ENCODE measurements at regions of chr1 and their contacts with region 1.

Region 1: GRCh38 chr1:11719313-11720032 is 16.5 kb upstream of the AGTRAP start:
- DNase-seq: peak; percentile 78
- ATAC-seq: peak; percentile 89
- H3K4me3 Mint-ChIP-seq: peak overlapping the region; percentile 86
- H3K27ac Mint-ChIP-seq: peak overlapping the region; percentile 94
- H3K4me1 Mint-ChIP-seq: peaks cover 13% of the 10 kb centered on the region
- H3K27me3 Mint-ChIP-seq: no peaks in the 10 kb centered on the region
- CTCF ChIP-seq: peak; percentile 87

Region 2: DNA sequence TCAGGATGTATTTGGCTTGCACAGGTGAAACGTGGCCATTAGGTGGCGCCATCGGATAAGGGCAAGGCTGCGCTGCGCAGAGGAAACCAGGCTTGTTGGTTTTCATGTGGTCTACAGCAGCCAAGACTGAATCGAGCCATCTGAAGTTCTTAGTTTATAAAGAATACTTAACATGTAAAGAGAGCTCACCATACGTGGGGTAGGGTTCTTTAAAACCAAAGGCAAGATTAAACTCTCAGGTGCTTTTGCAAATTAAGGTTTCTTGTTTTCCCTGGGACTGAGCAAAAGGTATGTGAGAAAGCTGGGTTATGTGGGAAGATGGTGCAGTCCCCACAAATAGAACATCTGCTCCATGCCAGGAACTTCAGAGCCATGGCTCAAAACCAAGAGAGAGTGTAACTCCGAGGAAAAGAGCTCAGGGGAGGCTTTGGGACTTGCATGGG is 681.7 kb before region 1 on chr1:
- CTCF ChIA-PET with region 1: interaction called, 7 read pairs
- POLR2A ChIA-PET with region 1: no interaction called
- intact Hi-C with region 1: loop called (anchors 1 kb)
- DNase-seq: peak; percentile 72
- ATAC-seq: peak; percentile 96
- H3K4me3 Mint-ChIP-seq: no peak overlapping the region
- H3K27ac Mint-ChIP-seq: no peak overlapping the region
- H3K4me1 Mint-ChIP-seq: peaks cover 4% of the 10 kb centered on the region
- H3K27me3 Mint-ChIP-seq: peaks cover 6% of the 10 kb centered on the region
- CTCF ChIP-seq: peak; percentile 57

Region 3: GRCh38 chr1:11337580-11338073 is 381.8 kb before region 1 on chr1:
- CTCF ChIA-PET with region 1: interaction called, 3 read pairs
- POLR2A ChIA-PET with region 1: no interaction called
- intact Hi-C with region 1: loop called (anchors 1 kb)
- DNase-seq: peak; percentile 68
- ATAC-seq: peak; percentile 59
- H3K4me3 Mint-ChIP-seq: no peak overlapping the region
- H3K27ac Mint-ChIP-seq: no peak overlapping the region
- H3K4me1 Mint-ChIP-seq: peaks cover 22% of the 10 kb centered on the region
- H3K27me3 Mint-ChIP-seq: peaks cover 22% of the 10 kb centered on the region
- CTCF ChIP-seq: peak; percentile 76

Region 4: DNA sequence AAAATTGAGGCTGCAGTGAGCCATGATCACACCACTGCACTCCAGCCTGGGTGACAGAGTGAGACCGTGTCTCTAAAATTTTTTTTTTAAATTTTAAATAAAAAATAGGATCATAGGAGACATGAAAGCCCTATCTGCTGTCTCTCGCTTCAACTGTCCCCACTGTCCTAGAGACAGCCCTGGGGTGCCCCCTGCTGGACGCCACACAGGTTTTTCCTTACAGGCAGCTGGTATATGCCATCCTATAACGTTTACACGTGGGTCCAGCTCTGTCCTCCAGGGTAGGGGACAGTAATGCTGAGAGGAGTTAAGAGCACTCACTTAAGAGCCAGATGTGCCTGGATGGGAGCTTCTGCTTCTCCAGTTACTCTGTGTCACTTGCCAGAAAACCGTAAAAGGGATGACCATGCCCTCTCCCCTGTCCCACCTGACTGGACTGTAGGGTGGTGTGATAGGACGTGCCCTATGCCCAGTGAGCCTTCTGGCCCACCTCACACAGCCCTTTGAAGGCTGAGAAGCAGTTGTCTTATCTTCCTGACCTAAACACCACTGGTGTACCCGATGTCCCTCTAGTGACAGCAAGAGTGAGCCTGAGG is 73.7 kb before region 1 on chr1:
- CTCF ChIA-PET with region 1: interaction called, 74 read pairs
- POLR2A ChIA-PET with region 1: interaction called, 36 read pairs
- intact Hi-C with region 1: loop called (anchors 1 kb)
- DNase-seq: peak; percentile 66
- ATAC-seq: peak; percentile 48
- H3K4me3 Mint-ChIP-seq: no peak overlapping the region
- H3K27ac Mint-ChIP-seq: no peak overlapping the region
- H3K4me1 Mint-ChIP-seq: peaks cover 15% of the 10 kb centered on the region
- H3K27me3 Mint-ChIP-seq: peaks cover 2% of the 10 kb centered on the region
- CTCF ChIP-seq: no peak

Region 5: DNA sequence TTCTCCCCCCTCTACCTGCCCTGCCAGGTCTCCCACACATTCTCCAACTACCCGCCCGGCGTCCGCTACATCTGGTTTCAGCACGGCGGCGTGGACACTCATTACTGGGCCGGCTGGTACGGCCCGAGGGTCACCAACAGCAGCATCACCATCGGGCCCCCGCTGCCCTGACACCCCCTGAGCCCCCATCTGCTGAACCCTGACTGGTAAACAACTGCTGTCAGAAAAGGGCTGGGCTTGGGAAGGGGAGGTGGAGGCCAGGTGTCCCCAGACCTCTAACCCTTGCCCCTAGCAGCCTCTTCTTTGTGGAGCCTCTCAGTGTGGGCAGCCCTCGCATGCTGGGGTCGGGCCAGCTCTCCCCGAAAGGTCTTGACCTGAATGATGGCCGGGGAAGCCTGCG is 58.4 kb before region 1 on chr1:
- CTCF ChIA-PET with region 1: interaction called, 61 read pairs
- POLR2A ChIA-PET with region 1: interaction called, 48 read pairs
- intact Hi-C with region 1: loop called (anchors 1 kb)
- DNase-seq: no peak
- ATAC-seq: no peak
- H3K4me3 Mint-ChIP-seq: no peak overlapping the region
- H3K27ac Mint-ChIP-seq: no peak overlapping the region
- H3K4me1 Mint-ChIP-seq: no peaks in the 10 kb centered on the region
- H3K27me3 Mint-ChIP-seq: no peaks in the 10 kb centered on the region
- CTCF ChIP-seq: no peak

Region 6: DNA sequence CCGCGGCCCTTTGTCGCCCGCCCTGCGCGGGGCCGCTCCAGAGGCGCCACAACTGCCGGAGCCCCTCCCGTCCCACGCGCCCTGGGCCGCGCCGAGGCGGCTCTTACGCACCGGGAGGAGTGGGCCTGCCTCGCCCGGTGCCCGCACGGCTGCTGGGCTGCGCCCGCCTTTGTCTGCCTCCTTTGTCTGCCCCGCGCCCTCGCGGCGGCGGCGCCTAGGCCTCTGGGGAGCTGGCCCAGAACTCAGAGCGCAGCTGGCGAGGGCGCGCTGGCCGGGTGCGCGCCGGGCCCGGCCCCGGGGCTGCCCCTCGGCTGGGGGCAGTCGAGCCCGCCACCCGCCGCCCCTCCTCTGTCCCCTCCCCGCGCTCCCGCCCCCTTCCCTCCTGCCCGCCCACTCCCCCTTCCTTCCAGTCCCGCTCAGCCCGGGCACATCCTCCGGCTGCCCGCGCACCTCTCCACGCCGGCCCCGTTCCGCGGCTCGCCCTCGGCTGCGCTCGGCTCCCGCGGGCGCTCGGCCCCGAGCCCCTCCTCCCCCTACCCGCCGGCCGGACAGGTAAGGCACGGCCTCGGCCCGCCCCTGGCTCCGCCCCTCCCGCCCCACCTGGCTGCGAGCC is 28.1 kb before region 1 on chr1 and contains the start of gene DRAXIN:
- CTCF ChIA-PET with region 1: no interaction called
- POLR2A ChIA-PET with region 1: no interaction called
- intact Hi-C with region 1: loop called (anchors 2 kb)
- DNase-seq: no peak
- ATAC-seq: peak; percentile 25
- H3K4me3 Mint-ChIP-seq: peak within 1 kb of the TSS; percentile 71
- H3K27ac Mint-ChIP-seq: no peak within 1 kb of the TSS
- H3K4me1 Mint-ChIP-seq: peaks cover 16% of the 10 kb centered on the region
- H3K27me3 Mint-ChIP-seq: peaks cover 46% of the 10 kb centered on the region
- CTCF ChIP-seq: no peak
- total RNA-seq, gene DRAXIN: 0.17 and 0.18 TPM in 2 replicates

Region 7: GRCh38 chr1:11735854-11736745 is 16.6 kb after region 1 on chr1 and contains the start of gene AGTRAP:
- CTCF ChIA-PET with region 1: interaction called, 16 read pairs
- POLR2A ChIA-PET with region 1: interaction called, 40 read pairs
- intact Hi-C with region 1: loop called (anchors 1 kb)
- DNase-seq: peak; percentile 80
- ATAC-seq: peak; percentile 88
- H3K4me3 Mint-ChIP-seq: peak within 1 kb of the TSS; percentile 93
- H3K27ac Mint-ChIP-seq: peak within 1 kb of the TSS; percentile 79
- H3K4me1 Mint-ChIP-seq: peaks cover 40% of the 10 kb centered on the region
- H3K27me3 Mint-ChIP-seq: no peaks in the 10 kb centered on the region
- CTCF ChIP-seq: no peak
- total RNA-seq, gene AGTRAP: 10.9 and 13.9 TPM in 2 replicates

Measured in activated B cell treated with CpG ODN at 0.5 μM for 24 hours (primary cell).